AG04450 (cell line): ENCODE measurements at regions of chr6 and their contacts with region 1.

Region 1: DNA sequence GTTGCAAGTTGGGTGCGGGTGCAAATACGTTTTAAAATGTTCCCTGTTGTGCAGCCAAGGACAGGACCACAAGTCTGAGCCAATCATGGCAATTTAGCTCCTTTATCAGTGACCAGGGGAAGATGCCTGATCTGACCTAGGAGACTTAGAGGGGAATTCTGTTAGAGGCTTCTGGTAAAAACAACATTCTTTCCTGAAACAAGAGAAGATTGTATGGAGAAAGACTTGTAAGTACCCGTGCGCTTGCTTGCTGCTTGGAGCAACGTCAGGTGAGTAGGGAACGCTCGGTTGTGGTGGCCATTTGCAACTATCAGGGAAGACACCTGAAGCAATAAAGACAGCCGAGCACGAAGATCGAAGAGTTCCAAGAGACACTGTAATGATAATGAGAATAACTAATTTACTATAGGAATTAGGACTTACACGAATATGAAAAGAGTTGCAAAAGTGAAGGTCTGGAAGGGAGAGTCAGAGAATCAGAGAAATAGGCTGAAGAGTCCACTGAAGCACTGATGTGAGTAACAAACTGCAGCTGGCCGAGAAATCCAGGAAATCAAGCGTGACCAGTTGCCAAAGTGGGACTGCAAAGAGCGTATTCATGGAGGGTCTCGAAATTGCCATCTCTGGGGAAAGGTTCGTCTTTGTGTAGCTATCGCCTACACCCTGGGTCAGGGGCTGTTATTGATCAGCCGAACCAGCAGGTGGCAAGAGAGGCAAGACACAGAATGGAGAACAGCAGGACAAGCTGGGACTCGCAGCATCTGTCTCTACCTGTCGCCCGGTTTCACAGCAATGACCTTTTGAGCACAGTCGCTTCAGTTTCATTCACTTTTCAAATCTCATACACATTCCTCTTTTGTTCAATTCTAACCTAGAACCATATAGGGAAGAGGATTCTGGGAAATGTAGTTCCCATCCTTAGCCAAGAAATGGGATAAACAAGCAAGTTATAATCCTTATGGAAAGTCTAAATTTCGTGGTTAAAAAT is 26.1 kb downstream of the LOC128125822 start:
- DNase-seq: no peak
- H3K4me3 ChIP-seq: peak overlapping the region; percentile 70
- H3K27ac ChIP-seq: no peak overlapping the region
- H3K27me3 ChIP-seq: no peaks in the 10 kb centered on the region
- CTCF ChIP-seq: peak; percentile 94

Region 2: GRCh38 chr6:63352587-63353285 is 245.6 kb before region 1 on chr6:
- CTCF ChIA-PET with region 1: interaction called, 22 read pairs
- POLR2A ChIA-PET with region 1: no interaction called
- DNase-seq: peak; percentile 15
- H3K4me3 ChIP-seq: no peak overlapping the region
- H3K27ac ChIP-seq: no peak overlapping the region
- H3K27me3 ChIP-seq: no peaks in the 10 kb centered on the region
- CTCF ChIP-seq: peak; percentile 73

Region 3: GRCh38 chr6:63584125-63584514 is 14.2 kb before region 1 on chr6:
- CTCF ChIA-PET with region 1: interaction called, 15 read pairs
- POLR2A ChIA-PET with region 1: no interaction called
- DNase-seq: no peak
- H3K4me3 ChIP-seq: no peak overlapping the region
- H3K27ac ChIP-seq: no peak overlapping the region
- H3K27me3 ChIP-seq: no peaks in the 10 kb centered on the region
- CTCF ChIP-seq: no peak

Region 4: DNA sequence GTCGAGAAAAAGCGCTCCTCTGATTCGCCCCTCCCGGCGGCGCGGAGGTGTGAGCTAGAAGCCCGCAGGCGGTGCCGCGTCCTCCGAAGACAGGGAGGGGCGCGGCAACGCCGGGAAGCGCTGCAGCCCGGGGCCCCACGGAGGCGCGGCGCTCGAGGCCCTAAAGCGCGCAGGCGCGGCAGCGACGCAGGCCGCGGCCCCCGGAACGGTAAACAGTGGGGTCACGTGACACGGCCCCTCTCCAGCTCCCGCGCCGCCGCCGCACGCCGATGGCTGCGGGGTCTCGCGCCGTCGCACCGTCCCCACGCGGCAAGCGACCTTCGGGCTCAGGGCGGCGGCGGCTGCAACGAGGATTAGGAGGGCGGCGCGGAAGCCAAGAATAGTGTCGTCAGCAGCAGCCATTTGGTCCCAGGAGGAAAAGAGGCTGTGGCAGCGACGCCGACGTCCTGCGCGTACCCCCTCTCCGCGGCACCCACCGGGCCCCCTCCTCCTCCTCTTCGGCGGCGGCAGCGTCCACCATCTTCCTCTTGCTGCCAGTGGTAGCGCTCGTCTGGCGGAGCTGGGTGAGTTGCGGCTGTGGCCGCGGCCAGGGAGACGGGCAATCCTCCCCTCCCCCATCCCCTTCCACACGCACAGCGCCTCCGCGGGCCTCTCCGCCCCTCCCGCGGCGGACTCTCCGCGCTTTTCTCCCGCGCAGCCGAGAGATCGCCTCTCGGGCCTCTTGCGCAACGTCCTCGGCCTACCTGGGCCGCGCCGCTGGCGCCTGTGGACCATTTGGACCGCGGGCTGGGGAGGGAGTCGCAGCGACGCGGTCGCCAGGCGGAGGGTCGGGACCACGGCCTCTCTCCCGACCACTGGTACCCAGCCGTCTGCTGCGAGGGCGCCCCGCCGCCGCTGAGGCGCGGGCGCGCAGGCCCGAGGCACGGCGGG is 37.5 kb after region 1 on chr6 and contains the start of gene PHF3:
- CTCF ChIA-PET with region 1: interaction called, 17 read pairs
- POLR2A ChIA-PET with region 1: interaction called, 4 read pairs
- DNase-seq: peak; percentile 59
- H3K4me3 ChIP-seq: peak within 1 kb of the TSS; percentile 80
- H3K27ac ChIP-seq: peak within 1 kb of the TSS; percentile 87
- H3K27me3 ChIP-seq: no peaks in the 10 kb centered on the region
- CTCF ChIP-seq: peak; percentile 25; the same call in 1 of the 2 replicates
- polyA plus RNA-seq, gene PHF3: 16.2 and 26.6 TPM in 2 replicates

Region 5: DNA sequence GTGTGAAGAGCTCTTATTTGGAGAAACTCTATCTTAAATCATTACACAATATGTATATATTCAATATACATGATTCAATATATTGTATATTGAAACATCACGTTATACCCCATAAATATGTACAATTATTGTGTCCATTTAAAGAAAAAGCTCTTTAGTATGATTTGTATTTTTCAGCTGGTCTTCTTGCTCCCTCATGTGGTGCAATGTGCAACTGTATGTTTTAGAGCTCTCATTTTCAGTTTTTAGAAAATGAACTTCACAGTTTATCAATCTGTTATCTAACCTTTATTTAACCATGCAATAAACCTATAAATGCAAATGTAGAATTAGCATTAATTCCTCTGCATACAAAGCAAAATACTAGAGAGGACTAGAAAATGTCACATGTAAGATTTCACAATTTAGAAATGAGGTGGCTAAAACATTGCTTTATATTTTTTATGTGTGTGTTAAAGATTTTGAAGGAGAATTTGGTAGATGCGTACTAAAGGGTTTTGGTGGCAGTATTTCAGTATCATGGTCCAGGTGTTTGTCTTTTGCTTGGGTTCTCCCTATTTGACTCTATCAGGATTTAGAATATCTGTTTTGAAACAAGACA is 204.4 kb after region 1 on chr6:
- CTCF ChIA-PET with region 1: interaction called, 25 read pairs
- POLR2A ChIA-PET with region 1: no interaction called
- DNase-seq: no peak
- H3K4me3 ChIP-seq: no peak overlapping the region
- H3K27ac ChIP-seq: no peak overlapping the region
- H3K27me3 ChIP-seq: no peaks in the 10 kb centered on the region
- CTCF ChIP-seq: peak; percentile 78